Heart left ventricle (tissue), 16 donors: ENCODE measurements at regions of chr10 and their contacts with region 1.

Region 1: GRCh38 chr10:132421392-132421877 is 24.4 kb downstream of the PWWP2B start:
- DNase-seq: peak; percentile 82 to 90 (median 88)
- ATAC-seq: peak; percentile 87 to 93 (median 90)
- H3K4me3 ChIP-seq: peak overlapping the region in 8 of 12 donors; percentile 7 to 27 (median 18)
- H3K27ac ChIP-seq: peak overlapping the region; percentile 48 to 94 (median 90)
- H3K4me1 ChIP-seq: peaks cover 0 to 68% (median 45%) of the 10 kb centered on the region in 12 donors
- H3K27me3 ChIP-seq: no peaks in the 10 kb centered on the region
- CTCF ChIP-seq: no peak
- POLR2A ChIP-seq: no peak

Region 2: DNA sequence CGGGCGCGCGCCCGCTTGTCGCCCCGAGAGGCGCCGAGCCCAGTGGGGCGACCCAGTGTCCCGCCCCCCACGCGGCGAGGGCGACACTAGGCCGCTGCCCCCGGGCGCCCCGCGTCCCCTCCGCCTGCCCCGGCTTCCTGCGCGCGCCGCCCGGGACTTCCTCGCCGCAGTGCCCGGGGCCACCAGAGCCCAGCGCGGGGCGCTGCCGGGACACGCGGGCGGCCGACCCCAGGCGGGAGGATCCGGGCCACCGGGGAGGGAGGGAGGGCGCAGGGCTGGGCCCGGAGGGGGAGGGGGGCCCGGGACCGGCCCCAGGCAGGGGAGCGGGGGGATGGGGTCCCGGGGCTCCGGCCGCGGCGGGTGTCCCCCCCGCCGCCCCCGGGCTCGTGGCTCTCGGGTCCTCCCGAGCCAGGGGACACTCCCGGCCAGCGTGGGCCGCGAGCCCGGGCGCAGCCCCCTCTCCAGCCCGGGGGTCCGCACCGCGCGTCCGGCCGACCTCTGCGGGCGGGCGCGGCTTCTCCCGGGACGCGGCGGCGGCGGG is 24.9 kb before region 1 on chr10:
- intact Hi-C with region 1: loop called in 2 of 10 experiments (anchors 1 to 2 kb)
- DNase-seq: peak; percentile 68 to 85 (median 75)
- ATAC-seq: peak in 3 of 4 donors; percentile 43 to 59 (median 53)
- H3K4me3 ChIP-seq: peak overlapping the region; percentile 21 to 98 (median 70)
- H3K27ac ChIP-seq: peak overlapping the region; percentile 86 to 99 (median 96)
- H3K4me1 ChIP-seq: peaks cover 0 to 63% (median 39%) of the 10 kb centered on the region in 12 donors
- H3K27me3 ChIP-seq: no peaks in the 10 kb centered on the region
- CTCF ChIP-seq: peak in 8 of 12 donors; percentile 7 to 54 (median 36)
- POLR2A ChIP-seq: no peak